Activated CD4-positive, alpha-beta T cell treated with anti-CD3 and anti-CD28 coated beads for 36 hours (primary cell): ENCODE measurements at regions of chr6 and their contacts with region 1.

Region 1: DNA sequence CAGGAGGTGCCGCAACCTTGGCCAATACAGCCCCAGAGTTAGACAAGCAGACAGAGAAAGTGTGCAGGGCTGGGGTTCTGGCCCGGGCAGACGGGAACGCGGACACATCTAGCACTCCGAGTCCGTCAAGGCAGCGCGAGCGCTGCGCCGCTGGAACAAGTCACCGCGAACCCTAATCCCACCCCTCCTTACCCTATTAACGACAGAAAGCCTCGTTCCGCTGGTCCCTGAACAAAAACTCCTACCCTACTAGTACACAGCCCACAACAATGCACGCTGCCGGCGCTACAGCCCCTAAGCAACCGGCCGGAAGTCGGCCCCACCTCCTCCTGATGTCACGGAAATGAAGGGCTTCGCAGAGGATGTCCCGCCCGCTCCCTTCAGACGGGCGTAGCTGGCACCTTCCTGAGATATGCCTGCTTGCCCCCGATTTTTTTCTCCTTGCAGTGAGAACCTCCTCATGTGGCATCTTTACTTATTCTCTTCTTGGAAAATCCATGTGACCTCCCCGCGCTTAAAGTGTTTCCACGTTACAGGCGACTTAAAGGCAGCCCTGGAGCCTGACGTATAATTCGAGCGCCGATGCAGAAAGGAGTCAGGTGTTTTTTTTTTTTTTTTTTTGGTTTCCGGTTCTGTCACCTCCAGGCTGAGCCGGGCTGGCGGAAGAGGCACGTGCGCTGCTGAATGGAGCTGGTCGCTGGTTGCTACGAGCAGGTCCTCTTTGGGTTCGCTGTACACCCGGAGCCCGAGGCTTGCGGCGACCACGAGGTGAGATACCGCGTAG is at the starts of genes C6orf52 and PAK1IP1:
- DNase-seq: peak; percentile 95
- ATAC-seq: peak; percentile 97
- H3K4me3 Mint-ChIP-seq: peak within 1 kb of the TSS; percentile 93
- H3K27ac Mint-ChIP-seq: peak within 1 kb of the TSS; percentile 100
- H3K4me1 Mint-ChIP-seq: peaks cover 29% of the 10 kb centered on the region
- H3K27me3 Mint-ChIP-seq: no peaks in the 10 kb centered on the region
- total RNA-seq, gene C6orf52: 1.2 to 2.4 TPM
- total RNA-seq, gene PAK1IP1: 35.6 to 39.4 TPM

Region 2: GRCh38 chr6:10404107-10404798 is 290.2 kb before region 1 on chr6:
- CTCF ChIA-PET with region 1: no interaction called
- POLR2A ChIA-PET with region 1: no interaction called
- intact Hi-C with region 1: loop called in 1 of 2 experiments (anchors 1 kb)
- DNase-seq: peak; percentile 95
- ATAC-seq: peak; percentile 95
- H3K4me3 Mint-ChIP-seq: peak overlapping the region; percentile 71
- H3K27ac Mint-ChIP-seq: peak overlapping the region; percentile 84
- H3K4me1 Mint-ChIP-seq: peaks cover 7% of the 10 kb centered on the region
- H3K27me3 Mint-ChIP-seq: peaks cover 60% of the 10 kb centered on the region

Region 3: DNA sequence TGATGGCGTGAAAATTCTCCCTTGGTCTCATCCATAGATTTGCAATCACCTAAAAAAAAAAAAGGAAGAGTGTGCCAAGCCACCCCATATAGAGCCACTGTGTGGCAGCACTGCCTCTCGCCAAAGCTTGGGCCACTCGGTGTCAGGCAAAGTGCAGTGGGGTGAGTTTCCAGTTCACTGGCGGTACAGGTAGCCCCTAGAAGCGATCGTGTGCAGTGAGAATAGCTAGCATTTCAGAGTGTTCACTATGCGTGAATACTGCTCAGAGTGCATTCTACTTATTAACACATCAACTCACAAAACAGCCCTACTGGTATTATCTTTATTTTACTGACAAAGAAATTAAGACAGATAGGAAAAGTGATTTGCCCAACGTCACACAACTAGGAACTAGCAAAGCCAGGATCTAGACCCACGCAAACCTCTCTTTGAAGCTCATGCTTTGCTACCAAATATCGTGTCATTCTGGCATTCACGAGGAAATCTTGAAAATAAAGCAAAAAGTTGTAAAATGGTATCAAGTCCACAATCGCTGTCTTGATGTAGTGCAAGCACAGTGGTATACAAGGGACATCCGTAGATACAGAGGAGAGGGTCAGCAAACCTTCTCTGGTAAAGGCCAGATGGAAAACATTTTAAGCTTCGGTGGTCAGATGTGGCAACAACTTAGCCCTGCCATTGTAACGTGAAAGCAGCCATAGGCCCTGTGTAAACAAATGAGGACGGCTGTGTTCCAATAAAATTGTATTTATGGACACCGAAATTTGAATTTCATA is 183.7 kb before region 1 on chr6:
- CTCF ChIA-PET with region 1: interaction called, 5 read pairs
- POLR2A ChIA-PET with region 1: no interaction called
- intact Hi-C with region 1: loop called in 1 of 2 experiments (anchors 1 kb)
- DNase-seq: peak; percentile 73
- ATAC-seq: peak; percentile 99
- H3K4me3 Mint-ChIP-seq: no peak overlapping the region
- H3K27ac Mint-ChIP-seq: no peak overlapping the region
- H3K4me1 Mint-ChIP-seq: peaks cover 5% of the 10 kb centered on the region
- H3K27me3 Mint-ChIP-seq: peaks cover 2% of the 10 kb centered on the region

Region 4: DNA sequence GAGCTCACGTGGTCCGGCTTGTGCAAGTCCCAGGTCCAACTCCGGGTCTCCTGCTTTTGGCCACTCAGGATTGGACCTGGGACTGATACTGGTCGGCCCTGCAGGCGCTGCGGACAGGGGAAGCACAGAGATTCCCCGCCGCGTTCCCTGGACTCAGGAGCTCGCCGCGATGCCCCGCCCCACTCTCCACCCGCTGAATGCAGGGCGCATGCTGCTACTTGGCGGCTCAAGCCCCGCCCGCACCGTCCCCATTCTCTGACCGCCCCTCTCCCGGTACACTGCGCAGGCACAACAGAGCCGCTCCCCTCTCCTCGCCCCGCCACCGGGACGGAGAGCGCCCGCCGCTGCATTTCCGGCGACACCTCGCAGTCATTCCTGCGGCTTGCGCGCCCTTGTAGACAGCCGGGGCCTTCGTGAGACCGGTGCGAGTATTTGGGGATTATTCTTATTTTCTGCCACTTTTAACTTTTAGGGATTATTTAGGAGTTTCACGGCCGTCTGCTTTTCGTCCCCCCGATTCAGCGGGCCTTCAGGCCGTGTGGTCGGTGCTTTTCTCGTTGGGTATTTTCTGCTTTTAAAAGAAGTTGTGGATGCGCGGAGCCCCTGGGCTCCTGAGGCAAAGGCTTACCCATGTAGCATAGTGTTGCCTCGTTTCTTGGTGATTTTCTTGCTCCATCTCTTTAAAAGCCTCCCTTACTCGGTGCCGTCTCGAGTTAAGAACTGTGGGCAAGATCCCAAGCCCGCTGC is 28.5 kb after region 1 on chr6 and contains the start of gene TMEM14C:
- CTCF ChIA-PET with region 1: interaction called, 7 read pairs
- POLR2A ChIA-PET with region 1: interaction called, 29 read pairs
- intact Hi-C with region 1: loop called (anchors 1 kb)
- DNase-seq: peak; percentile 94
- ATAC-seq: peak; percentile 95
- H3K4me3 Mint-ChIP-seq: peak within 1 kb of the TSS; percentile 92
- H3K27ac Mint-ChIP-seq: peak within 1 kb of the TSS; percentile 93
- H3K4me1 Mint-ChIP-seq: peaks cover 49% of the 10 kb centered on the region
- H3K27me3 Mint-ChIP-seq: no peaks in the 10 kb centered on the region
- total RNA-seq, gene TMEM14C: 67.6 to 81.7 TPM

Region 5: GRCh38 chr6:10837995-10838793 is 143.7 kb after region 1 on chr6 and contains the start of gene MAK:
- CTCF ChIA-PET with region 1: interaction called, 3 read pairs
- POLR2A ChIA-PET with region 1: no interaction called
- intact Hi-C with region 1: loop called (anchors 1 to 2 kb)
- DNase-seq: peak; percentile 91
- ATAC-seq: peak; percentile 89
- H3K4me3 Mint-ChIP-seq: peak within 1 kb of the TSS; percentile 70
- H3K27ac Mint-ChIP-seq: peak within 1 kb of the TSS; percentile 96
- H3K4me1 Mint-ChIP-seq: peaks cover 22% of the 10 kb centered on the region
- H3K27me3 Mint-ChIP-seq: peaks cover 48% of the 10 kb centered on the region
- total RNA-seq, gene MAK: 0.42 to 0.43 TPM